PC-9 (cell line): ENCODE measurements at regions of chr17 and their contacts with region 1.

Region 1: GRCh38 chr17:50988427-50988826 is 122.3 kb upstream of the TOB1 start:
- DNase-seq: no peak
- H3K4me3 ChIP-seq: no peak overlapping the region
- H3K27ac ChIP-seq: no peak overlapping the region
- H3K4me1 ChIP-seq: no peaks in the 10 kb centered on the region
- H3K27me3 ChIP-seq: no peaks in the 10 kb centered on the region
- CTCF ChIP-seq: no peak

Region 2: GRCh38 chr17:51180486-51180885 is 192.1 kb after region 1 on chr17:
- CTCF ChIA-PET with region 1: no interaction called
- POLR2A ChIA-PET with region 1: interaction called, 16 read pairs
- intact Hi-C with region 1: no loop called
- DNase-seq: no peak
- H3K4me3 ChIP-seq: no peak overlapping the region
- H3K27ac ChIP-seq: no peak overlapping the region
- H3K4me1 ChIP-seq: no peaks in the 10 kb centered on the region
- H3K27me3 ChIP-seq: no peaks in the 10 kb centered on the region
- CTCF ChIP-seq: no peak